HepG2 (cell line): ENCODE measurements at regions of chr6 and their contacts with region 1.

Region 1: DNA sequence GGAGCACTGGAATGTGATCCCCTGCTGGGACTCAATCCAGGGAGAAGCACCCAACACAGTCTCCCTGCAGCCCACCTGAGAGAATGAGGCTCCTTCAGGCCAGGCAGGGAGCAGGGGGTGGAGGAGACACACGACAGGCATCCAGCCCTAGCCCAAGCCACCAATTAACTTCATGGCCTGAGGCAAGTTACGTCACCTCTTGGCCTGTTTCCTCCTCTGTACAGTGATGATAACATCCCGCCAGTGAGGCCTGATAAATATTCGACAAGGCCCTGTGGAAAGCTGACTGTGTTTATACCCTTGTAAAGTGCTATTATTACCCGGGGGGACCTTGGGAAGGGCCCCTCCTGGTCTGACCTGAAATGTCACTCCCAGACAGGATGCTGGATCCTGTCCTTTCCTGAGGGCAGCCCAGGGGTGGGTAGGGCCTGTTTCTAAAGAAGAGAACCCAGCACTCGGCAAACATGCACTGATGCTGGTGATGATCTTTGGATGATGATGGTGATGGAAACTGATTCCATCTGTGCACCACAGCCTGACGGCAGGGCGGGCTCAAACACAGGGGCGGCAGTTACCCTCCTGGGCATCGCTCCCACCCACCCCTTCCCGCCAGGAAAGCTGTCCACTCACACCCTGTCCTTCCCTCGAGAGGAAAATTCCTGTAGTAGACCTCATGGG is 12.4 kb downstream of the FRS3 start:
- DNase-seq: peak; percentile 82
- ATAC-seq: peak; percentile 47
- H3K4me3 ChIP-seq: no peak overlapping the region
- H3K27ac ChIP-seq: no peak overlapping the region
- H3K4me1 ChIP-seq: peaks cover 45% of the 10 kb centered on the region
- H3K27me3 ChIP-seq: no peaks in the 10 kb centered on the region
- CTCF ChIP-seq: no peak
- EP300 ChIP-seq: no peak
- POLR2A ChIP-seq: no peak
- RAD21 ChIP-seq: no peak

Region 2: GRCh38 chr6:40116832-40117231 is 1650.5 kb before region 1 on chr6:
- CTCF ChIA-PET with region 1: no interaction called
- POLR2A ChIA-PET with region 1: no interaction called
- in situ Hi-C with region 1: no loop called
- intact Hi-C with region 1: no loop called
- DNase-seq: no peak
- ATAC-seq: no peak
- H3K4me3 ChIP-seq: no peak overlapping the region
- H3K27ac ChIP-seq: no peak overlapping the region
- H3K4me1 ChIP-seq: no peaks in the 10 kb centered on the region
- H3K27me3 ChIP-seq: no peaks in the 10 kb centered on the region
- CTCF ChIP-seq: no peak
- EP300 ChIP-seq: no peak
- POLR2A ChIP-seq: no peak
- RAD21 ChIP-seq: no peak

Region 3: GRCh38 chr6:41638935-41639611 is 128.2 kb before region 1 on chr6:
- CTCF ChIA-PET with region 1: no interaction called
- POLR2A ChIA-PET with region 1: no interaction called
- in situ Hi-C with region 1: no loop called
- intact Hi-C with region 1: no loop called
- DNase-seq: no peak
- ATAC-seq: no peak
- H3K4me3 ChIP-seq: peak overlapping the region in 2 of 3 experiments; percentile 48 to 51; a peak in 3 of 6 replicates
- H3K27ac ChIP-seq: no peak overlapping the region
- H3K4me1 ChIP-seq: peaks cover 38% of the 10 kb centered on the region
- H3K27me3 ChIP-seq: peaks cover 10 to 87% of the 10 kb centered on the region in 2 experiments
- CTCF ChIP-seq: no peak
- EP300 ChIP-seq: no peak
- POLR2A ChIP-seq: no peak
- RAD21 ChIP-seq: no peak

Region 4: DNA sequence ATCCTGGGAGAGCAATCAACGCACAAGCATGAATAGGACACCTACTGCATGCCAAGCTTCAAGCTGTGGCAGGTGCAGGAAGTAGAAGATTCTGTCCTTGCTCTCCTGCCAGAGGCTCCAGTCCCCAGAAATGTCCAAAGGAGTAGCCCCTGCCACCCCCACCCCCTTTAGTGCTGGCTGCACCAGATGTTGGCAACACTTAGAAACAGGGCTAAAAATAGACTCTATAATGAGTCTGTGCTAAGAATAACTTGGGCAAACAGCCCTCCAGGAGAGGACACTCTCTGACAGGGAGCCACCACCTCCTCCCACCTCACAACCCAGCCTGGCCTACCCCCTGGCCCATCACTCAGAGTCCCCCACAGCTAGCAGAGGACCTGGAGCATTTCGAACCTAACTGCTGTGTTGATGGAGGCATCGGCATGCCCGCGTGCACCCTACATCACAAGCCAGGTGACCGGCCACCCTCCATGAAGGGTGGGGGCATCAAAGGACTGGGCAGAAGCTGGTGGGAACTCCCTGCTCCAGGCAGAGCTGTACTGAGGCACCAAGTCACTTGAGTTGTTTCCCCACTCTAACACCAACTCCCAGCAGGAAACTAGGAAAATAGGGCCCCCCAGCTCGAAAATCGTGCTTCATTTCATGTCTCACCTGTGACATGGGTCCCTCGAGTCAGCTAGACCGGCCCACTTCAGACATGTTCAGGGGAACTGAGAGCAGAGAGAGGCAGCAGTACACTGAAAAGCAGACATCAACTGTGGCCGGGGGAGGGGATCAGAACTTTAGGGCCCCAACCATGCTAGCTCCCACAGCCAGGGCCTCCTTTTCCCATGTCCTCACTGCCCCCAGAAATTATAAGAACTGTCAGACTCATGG is 50.5 kb before region 1 on chr6:
- CTCF ChIA-PET with region 1: no interaction called
- POLR2A ChIA-PET with region 1: no interaction called
- in situ Hi-C with region 1: no loop called
- intact Hi-C with region 1: no loop called
- DNase-seq: no peak
- ATAC-seq: no peak
- H3K4me3 ChIP-seq: no peak overlapping the region
- H3K27ac ChIP-seq: no peak overlapping the region
- H3K4me1 ChIP-seq: peaks cover 19% of the 10 kb centered on the region
- H3K27me3 ChIP-seq: no peaks in the 10 kb centered on the region
- CTCF ChIP-seq: no peak
- EP300 ChIP-seq: no peak
- POLR2A ChIP-seq: no peak
- RAD21 ChIP-seq: no peak

Region 5: GRCh38 chr6:41747256-41748101 is 19.8 kb before region 1 on chr6 and contains the start of gene PGC:
- CTCF ChIA-PET with region 1: no interaction called
- POLR2A ChIA-PET with region 1: interaction called, 112 read pairs
- in situ Hi-C with region 1: no loop called
- intact Hi-C with region 1: loop called (anchors 1 kb)
- DNase-seq: peak; percentile 99
- ATAC-seq: peak; percentile 89
- H3K4me3 ChIP-seq: peak within 1 kb of the TSS; percentile 16 to 60 (median 38); a peak in 5 of 6 replicates
- H3K27ac ChIP-seq: peak within 1 kb of the TSS; percentile 91
- H3K4me1 ChIP-seq: peaks cover 83% of the 10 kb centered on the region
- H3K27me3 ChIP-seq: no peaks in the 10 kb centered on the region
- CTCF ChIP-seq: peak; percentile 16; the same call in 1 of the 2 replicates
- EP300 ChIP-seq: peak; percentile 94; a peak in 3 of 4 replicates
- POLR2A ChIP-seq: peak; percentile 70 to 73; a peak in 3 of 4 replicates
- RAD21 ChIP-seq: no peak; the same call in 1 of the 2 replicates
- total RNA-seq, gene PGC: 225 and 502 TPM in 2 replicates

Region 6: DNA sequence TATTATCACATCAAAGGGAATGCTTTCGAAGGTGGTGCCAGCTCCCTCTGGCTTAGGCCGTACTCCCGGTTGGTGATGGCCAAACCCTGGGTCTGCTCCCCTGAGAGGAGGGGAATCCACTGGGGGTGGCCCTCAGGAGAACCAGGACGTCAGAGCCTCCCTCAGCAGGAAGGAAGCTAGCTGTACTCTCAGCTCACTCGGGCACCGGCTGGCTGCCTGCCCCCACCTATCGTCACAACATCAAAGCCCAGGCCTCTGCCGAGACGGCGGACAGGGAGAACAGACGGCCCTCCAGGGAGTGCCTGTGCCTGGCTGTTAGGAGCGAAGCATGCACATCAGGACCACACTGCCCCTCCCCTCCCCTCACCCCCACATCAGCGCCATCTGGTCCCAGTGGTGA is 10.9 kb before region 1 on chr6:
- CTCF ChIA-PET with region 1: no interaction called
- POLR2A ChIA-PET with region 1: interaction called, 94 read pairs
- in situ Hi-C with region 1: no loop called
- intact Hi-C with region 1: no loop called
- DNase-seq: no peak
- ATAC-seq: peak; percentile 75
- H3K4me3 ChIP-seq: peak overlapping the region in 1 of 3 experiments; percentile 0; a peak in 1 of 6 replicates
- H3K27ac ChIP-seq: no peak overlapping the region
- H3K4me1 ChIP-seq: peaks cover 71% of the 10 kb centered on the region
- H3K27me3 ChIP-seq: no peaks in the 10 kb centered on the region
- CTCF ChIP-seq: no peak; the same call in 1 of the 2 replicates
- EP300 ChIP-seq: no peak
- POLR2A ChIP-seq: no peak
- RAD21 ChIP-seq: 0 out of 2 replicates have a peak, but pooled peaks have one; percentile 16

Region 7: GRCh38 chr6:41801380-41801779 is 34.1 kb after region 1 on chr6:
- CTCF ChIA-PET with region 1: no interaction called
- POLR2A ChIA-PET with region 1: no interaction called
- in situ Hi-C with region 1: no loop called
- intact Hi-C with region 1: no loop called
- DNase-seq: no peak
- ATAC-seq: peak; percentile 53; the same call in 2 of the 3 replicates
- H3K4me3 ChIP-seq: no peak overlapping the region
- H3K27ac ChIP-seq: no peak overlapping the region
- H3K4me1 ChIP-seq: no peaks in the 10 kb centered on the region
- H3K27me3 ChIP-seq: no peaks in the 10 kb centered on the region
- CTCF ChIP-seq: peak; percentile 23; the same call in 1 of the 2 replicates
- EP300 ChIP-seq: no peak
- POLR2A ChIP-seq: no peak
- RAD21 ChIP-seq: peak; percentile 16; the same call in 1 of the 2 replicates